Left ventricle myocardium superior (tissue), 1 donor: ENCODE measurements at regions of chr14 and their contacts with region 1.

Region 1: GRCh38 chr14:76050797-76051392 is 65.3 kb downstream of the IFT43 start:
- DNase-seq: no peak
- ATAC-seq: peak; percentile 84

Region 2: GRCh38 chr14:76090616-76091391 is 39.9 kb after region 1 on chr14:
- intact Hi-C with region 1: no loop called
- DNase-seq: peak; percentile 72
- ATAC-seq: peak; percentile 89

Region 3: GRCh38 chr14:76352639-76353281 is 301.9 kb after region 1 on chr14:
- intact Hi-C with region 1: loop called (anchors 5 kb)
- DNase-seq: peak; percentile 82
- ATAC-seq: peak; percentile 87

Region 4: GRCh38 chr14:76386915-76387782 is 336.3 kb after region 1 on chr14:
- intact Hi-C with region 1: loop called (anchors 10 kb)
- DNase-seq: peak; percentile 74
- ATAC-seq: peak; percentile 90

Region 5: GRCh38 chr14:76647697-76648298 is 596.9 kb after region 1 on chr14:
- intact Hi-C with region 1: loop called (anchors 10 kb)
- DNase-seq: no peak
- ATAC-seq: peak; percentile 76